Activated T-helper 2 cell treated with anti-CD3 and anti-CD28 coated beads, Interferon-gamma antibody, Interleukin-2, Interleukin-4, amounts not matched to agents 10 μg/mL and 5 μg/mL and 100 μg/mL, durations not matched to agents 14 hours and 24 hours and 36 hours (primary cell): ENCODE measurements at regions of chr7 and their contacts with region 1.

Region 1: DNA sequence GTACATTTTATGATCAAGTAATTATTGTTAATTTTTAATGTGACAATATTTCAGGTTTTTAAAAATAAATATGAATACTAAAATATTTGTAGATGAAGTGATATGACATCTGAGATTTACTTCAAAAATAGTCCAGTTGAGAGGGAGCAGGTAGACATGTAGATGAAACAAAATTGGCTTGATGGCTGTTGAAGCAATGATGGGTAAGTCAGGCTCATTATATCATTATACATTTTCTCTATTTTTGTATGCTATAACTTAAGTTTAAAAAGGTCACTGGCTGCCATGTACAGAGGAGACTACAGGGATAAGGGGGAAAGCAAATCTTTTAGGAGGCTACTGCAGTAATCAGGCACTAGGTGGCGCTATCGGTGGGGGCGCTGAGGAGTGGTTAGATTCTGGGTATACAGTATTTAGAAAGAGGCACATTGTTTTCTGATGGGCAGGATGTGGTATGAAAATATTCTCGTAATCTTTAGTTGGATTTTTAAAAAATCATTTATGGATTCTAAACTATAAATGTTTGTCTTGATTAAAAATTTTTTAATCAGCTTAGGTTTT is 189.8 kb upstream of the IMMP2L start:
- DNase-seq: peak; percentile 35
- H3K4me3 Mint-ChIP-seq: no peak overlapping the region
- H3K27ac Mint-ChIP-seq: no peak overlapping the region
- H3K4me1 Mint-ChIP-seq: no peaks in the 10 kb centered on the region
- H3K27me3 Mint-ChIP-seq: peaks cover 12% of the 10 kb centered on the region

Region 2: GRCh38 chr7:111855161-111855856 is 103.2 kb after region 1 on chr7:
- intact Hi-C with region 1: loop called (anchors 5 kb)
- DNase-seq: no peak
- H3K4me3 Mint-ChIP-seq: no peak overlapping the region
- H3K27ac Mint-ChIP-seq: no peak overlapping the region
- H3K4me1 Mint-ChIP-seq: peaks cover 5% of the 10 kb centered on the region
- H3K27me3 Mint-ChIP-seq: no peaks in the 10 kb centered on the region

Region 3: DNA sequence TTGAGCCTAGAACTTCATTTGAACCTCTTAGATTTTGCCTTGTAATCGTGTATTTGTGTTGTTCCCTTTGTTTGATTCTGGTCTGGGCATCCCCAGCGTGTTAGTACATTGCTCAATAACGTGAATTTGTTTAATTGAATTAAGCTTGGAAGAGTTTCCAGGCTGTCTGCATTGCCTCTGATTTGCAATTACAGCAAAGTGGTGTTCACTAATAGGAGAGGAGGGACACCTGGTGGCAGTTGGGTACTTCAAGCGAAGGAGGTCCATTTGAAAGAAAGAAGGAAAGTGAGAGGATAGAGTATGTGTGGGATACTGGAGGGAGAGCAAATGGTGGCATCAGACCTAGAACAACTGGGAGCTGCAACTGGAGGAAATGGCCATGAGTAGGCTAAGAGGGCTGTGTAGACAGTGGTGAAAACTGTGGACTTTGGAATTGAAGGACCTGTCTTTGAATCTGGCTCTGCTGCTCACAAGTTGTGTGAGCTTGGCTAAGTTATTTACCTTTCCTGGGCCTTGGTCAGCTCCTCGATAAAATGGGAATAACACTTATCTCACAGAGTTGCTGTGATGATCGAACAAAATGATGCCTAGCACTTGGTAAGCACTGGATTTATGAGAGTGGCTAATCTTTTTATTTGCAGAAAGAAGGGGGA is 743.8 kb after region 1 on chr7:
- intact Hi-C with region 1: loop called (anchors 5 kb)
- DNase-seq: no peak
- H3K4me3 Mint-ChIP-seq: no peak overlapping the region
- H3K27ac Mint-ChIP-seq: no peak overlapping the region
- H3K4me1 Mint-ChIP-seq: no peaks in the 10 kb centered on the region
- H3K27me3 Mint-ChIP-seq: peaks cover 31% of the 10 kb centered on the region